ENCODE measurements at regions of chr9 and their contacts with region 1.

Region 1: DNA sequence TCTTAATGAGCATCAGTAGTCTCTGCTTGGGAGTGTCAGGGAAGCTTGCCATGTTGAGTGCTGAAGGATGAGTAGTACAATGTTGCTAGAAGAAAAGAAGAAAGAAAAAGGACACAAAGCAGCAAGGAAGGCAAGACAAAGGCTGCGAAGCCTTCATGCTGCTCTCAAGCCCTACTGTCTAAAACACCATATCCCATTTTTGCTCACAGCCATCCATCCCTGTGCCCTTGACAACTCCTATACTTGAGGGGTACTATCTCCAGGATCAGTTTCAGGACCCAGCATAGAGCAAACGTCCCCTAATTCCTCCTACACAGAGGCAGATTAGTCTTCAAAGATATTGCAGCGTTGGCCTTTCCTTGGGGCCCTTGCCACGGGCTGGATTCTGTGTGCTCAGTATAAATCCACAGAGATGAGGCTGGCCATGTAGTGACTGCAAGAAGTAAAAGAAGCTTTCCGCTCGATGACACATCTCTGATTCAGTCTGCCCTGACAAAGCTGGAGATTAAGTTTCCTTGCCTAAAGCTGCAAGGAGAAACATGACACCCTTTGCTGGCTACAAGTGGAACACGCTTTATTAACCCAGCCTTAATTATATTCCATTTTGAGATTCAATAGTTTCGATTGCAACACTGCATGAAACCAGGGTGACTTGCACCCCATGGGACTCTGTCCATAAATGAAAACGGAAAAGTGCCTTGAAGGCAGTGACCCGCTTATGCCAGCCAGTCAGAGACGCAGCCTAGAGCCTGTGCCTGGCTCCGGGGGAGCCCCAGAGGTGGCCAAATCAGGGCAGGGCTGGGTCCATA is 304.6 kb downstream of the ACTL7B start:
- DNase-seq: no peak
- H3K4me3 ChIP-seq: no peak overlapping the region
- H3K27ac ChIP-seq: no peak overlapping the region
- H3K27me3 ChIP-seq: no peaks in the 10 kb centered on the region
- CTCF ChIP-seq: no peak

Region 2: GRCh38 chr9:108496846-108497245 is 54.4 kb before region 1 on chr9:
- intact Hi-C with region 1: loop called in 1 of 2 experiments (anchors 10 kb)
- DNase-seq: no peak
- H3K4me3 ChIP-seq: no peak overlapping the region
- H3K27ac ChIP-seq: no peak overlapping the region
- H3K27me3 ChIP-seq: peaks cover 0 to 4% (median 0%) of the 10 kb centered on the region in 45 donors
- CTCF ChIP-seq: no peak

Region 3: GRCh38 chr9:108654566-108654965 is 103.3 kb after region 1 on chr9:
- intact Hi-C with region 1: no loop called
- DNase-seq: no peak
- H3K4me3 ChIP-seq: no peak overlapping the region
- H3K27ac ChIP-seq: no peak overlapping the region
- H3K27me3 ChIP-seq: peaks cover 0 to 2% (median 0%) of the 10 kb centered on the region in 45 donors
- CTCF ChIP-seq: no peak

Region 4: GRCh38 chr9:108704156-108704852 is 153.1 kb after region 1 on chr9:
- intact Hi-C with region 1: no loop called
- DNase-seq: no peak
- H3K4me3 ChIP-seq: no peak overlapping the region
- H3K27ac ChIP-seq: peak overlapping the region in 2 of 59 donors; percentile 33 to 35
- H3K27me3 ChIP-seq: no peaks in the 10 kb centered on the region
- CTCF ChIP-seq: no peak

Region 5: GRCh38 chr9:108722396-108722795 is 171.2 kb after region 1 on chr9:
- intact Hi-C with region 1: no loop called
- DNase-seq: no peak
- H3K4me3 ChIP-seq: no peak overlapping the region
- H3K27ac ChIP-seq: no peak overlapping the region
- H3K27me3 ChIP-seq: no peaks in the 10 kb centered on the region
- CTCF ChIP-seq: no peak